Caco-2 (cell line): ENCODE measurements at regions of chr2 and their contacts with region 1.

Region 1: DNA sequence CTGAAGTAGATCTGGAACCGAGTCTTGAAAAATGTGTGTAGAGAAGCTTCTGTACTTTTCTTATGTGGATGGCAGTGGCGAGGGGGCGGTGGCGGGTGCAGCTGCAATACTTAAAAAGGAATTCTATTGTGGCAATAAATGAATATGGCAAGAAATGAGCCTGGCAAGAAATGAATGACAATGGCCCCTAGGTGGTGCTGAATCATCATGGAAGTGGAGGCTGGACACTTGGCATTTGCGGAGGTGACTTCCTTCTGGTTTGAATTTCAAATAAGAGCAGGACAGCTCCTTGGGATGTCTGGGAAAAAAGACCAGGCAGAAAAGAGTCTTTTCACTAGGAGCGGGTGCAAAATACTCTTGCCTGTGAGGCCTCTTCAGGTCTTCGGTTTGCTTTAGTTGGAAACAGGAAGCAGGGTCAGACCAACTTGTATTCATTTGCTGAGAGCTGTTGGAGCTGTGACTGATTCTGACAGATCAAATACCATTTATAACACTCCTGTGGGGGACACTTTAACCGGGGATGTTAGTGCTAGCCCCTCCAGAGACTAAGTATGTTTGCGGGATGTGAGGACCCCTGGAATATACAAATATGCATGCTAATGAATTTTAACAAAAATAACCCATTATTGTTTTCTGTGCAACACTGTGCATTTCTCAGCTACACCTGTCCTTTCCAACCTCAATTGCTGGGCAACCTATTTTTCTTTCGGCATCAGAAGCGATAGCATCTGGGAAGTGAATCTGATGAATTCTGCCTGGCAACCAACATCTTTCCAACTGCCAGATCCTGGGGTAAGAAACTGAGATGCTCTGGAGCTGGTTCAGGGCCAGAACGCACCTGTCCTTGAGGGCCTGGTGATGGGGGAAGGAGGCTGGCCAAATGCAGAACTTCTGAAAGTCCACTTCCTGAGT is 35.4 kb downstream of the FASTKD2 start:
- DNase-seq: peak; percentile 50 to 71
- H3K4me3 ChIP-seq: no peak overlapping the region
- H3K4me3 Mint-ChIP-seq: no peak overlapping the region
- H3K27ac Mint-ChIP-seq: no peak overlapping the region
- H3K4me1 ChIP-seq: no peaks in the 10 kb centered on the region
- H3K4me1 Mint-ChIP-seq: no peaks in the 10 kb centered on the region
- H3K27me3 ChIP-seq: no peaks in the 10 kb centered on the region
- H3K27me3 Mint-ChIP-seq: no peaks in the 10 kb centered on the region
- CTCF ChIP-seq: peak; percentile 64 to 69

Region 2: DNA sequence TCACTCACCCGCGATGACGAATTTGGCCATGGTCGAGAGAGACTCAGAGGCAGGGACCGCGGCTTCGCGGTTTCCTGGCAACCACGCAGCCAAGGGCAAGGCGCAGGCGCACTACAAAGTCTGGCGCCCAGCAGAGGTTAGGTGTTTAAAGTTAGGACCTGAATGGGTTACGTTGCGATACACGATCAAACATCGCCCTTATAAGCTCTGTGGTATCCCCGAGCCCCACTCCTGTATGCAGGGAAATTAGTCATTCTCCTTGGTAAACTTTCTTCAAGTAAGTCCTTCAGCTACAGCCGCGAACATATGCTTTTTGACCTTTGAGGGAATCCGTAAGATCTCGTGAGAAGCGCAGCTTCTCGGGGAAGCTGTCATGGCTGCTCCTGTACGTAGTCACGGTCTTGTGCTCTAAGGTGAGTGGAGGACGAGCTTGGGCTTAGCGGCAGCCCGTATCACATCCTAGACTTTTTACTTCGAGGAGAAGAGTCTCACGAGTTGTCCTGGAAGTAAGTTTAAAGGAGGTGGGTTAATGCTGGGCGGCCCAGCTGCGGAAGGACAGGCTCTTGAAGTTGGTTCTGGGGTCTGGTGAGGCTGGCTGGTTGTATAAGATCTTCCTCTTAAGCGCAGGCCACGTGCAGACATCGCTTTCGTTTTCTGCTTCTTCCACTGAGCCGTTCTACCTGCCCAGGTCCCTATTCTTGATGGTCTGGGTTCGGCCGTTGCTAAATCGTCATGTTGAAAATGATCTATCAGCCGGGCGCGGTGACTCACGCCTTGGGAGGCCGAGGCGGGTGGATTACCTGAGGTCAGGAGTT is 35.3 kb before region 1 on chr2 and contains the starts of genes FASTKD2 and MDH1B:
- CTCF ChIA-PET with region 1: no interaction called
- POLR2A ChIA-PET with region 1: no interaction called
- intact Hi-C with region 1: no loop called
- DNase-seq: peak; percentile 86 to 88
- H3K4me3 ChIP-seq: peak within 1 kb of the TSS; percentile 66
- H3K4me3 Mint-ChIP-seq: peak within 1 kb of the TSS; percentile 82
- H3K27ac Mint-ChIP-seq: peak within 1 kb of the TSS; percentile 93
- H3K4me1 ChIP-seq: no peaks in the 10 kb centered on the region
- H3K4me1 Mint-ChIP-seq: peaks cover 8% of the 10 kb centered on the region
- H3K27me3 ChIP-seq: no peaks in the 10 kb centered on the region
- H3K27me3 Mint-ChIP-seq: peaks cover 3% of the 10 kb centered on the region
- CTCF ChIP-seq: no peak
- total RNA-seq, gene FASTKD2: 29.8 and 30.3 TPM in 2 replicates
- total RNA-seq, gene MDH1B: 0.34 and 0.39 TPM in 2 replicates

Region 3: DNA sequence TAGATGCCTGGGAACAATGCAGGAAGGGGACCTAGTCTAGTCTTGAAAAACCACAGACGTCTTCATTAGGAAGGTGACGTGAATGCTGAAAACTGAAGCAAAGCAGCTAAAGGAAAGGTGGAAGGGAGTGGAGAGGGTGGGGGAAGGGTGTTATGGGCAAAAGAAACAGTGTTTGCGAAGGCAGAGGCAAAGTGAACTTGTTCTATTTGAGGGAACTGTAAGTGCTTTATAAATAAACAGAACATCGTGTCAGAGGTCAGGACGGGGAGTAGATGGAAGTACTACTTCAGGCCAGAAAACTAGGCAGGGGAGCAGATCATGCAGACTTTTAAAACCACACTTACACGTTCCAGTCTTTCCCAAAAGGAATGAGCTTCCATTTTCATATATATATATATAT is 22.4 kb after region 1 on chr2:
- CTCF ChIA-PET with region 1: no interaction called
- POLR2A ChIA-PET with region 1: no interaction called
- intact Hi-C with region 1: no loop called
- DNase-seq: no peak
- H3K4me3 ChIP-seq: no peak overlapping the region
- H3K4me3 Mint-ChIP-seq: no peak overlapping the region
- H3K27ac Mint-ChIP-seq: no peak overlapping the region
- H3K4me1 ChIP-seq: no peaks in the 10 kb centered on the region
- H3K4me1 Mint-ChIP-seq: peaks cover 5% of the 10 kb centered on the region
- H3K27me3 ChIP-seq: no peaks in the 10 kb centered on the region; the same call in 1 of the 2 replicates
- H3K27me3 Mint-ChIP-seq: peaks cover 4% of the 10 kb centered on the region
- CTCF ChIP-seq: no peak

Region 4: DNA sequence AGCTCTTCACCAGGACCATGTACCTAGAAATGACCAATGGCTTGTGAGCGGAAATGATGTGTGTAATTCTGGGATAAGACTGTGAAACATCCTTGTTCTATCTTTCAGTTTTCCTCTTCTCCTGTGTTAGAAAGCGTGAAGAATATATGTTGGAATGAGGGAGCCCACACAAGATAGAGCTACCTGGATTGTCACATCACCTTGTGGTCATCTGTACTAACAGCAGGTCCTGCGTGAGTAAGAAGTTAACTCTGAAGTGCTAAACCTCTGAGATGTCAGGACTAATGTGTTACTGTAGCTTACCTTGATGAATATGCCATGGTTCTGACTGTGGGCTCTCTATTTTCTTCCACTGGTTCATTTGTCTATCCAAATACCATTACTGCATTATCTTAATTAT is 40.2 kb after region 1 on chr2:
- CTCF ChIA-PET with region 1: interaction called, 4 read pairs
- POLR2A ChIA-PET with region 1: no interaction called
- intact Hi-C with region 1: loop called (anchors 1 kb)
- DNase-seq: peak in 1 of 2 experiments; percentile 11
- H3K4me3 ChIP-seq: no peak overlapping the region
- H3K4me3 Mint-ChIP-seq: no peak overlapping the region
- H3K27ac Mint-ChIP-seq: no peak overlapping the region
- H3K4me1 ChIP-seq: no peaks in the 10 kb centered on the region
- H3K4me1 Mint-ChIP-seq: no peaks in the 10 kb centered on the region
- H3K27me3 ChIP-seq: no peaks in the 10 kb centered on the region
- H3K27me3 Mint-ChIP-seq: peaks cover 9% of the 10 kb centered on the region
- CTCF ChIP-seq: peak; percentile 22 to 62

Region 5: GRCh38 chr2:206989306-206989705 is 188.5 kb after region 1 on chr2:
- CTCF ChIA-PET with region 1: interaction called, 4 read pairs
- POLR2A ChIA-PET with region 1: no interaction called
- intact Hi-C with region 1: loop called (anchors 1 kb)
- DNase-seq: peak; percentile 43 to 46
- H3K4me3 ChIP-seq: no peak overlapping the region
- H3K4me3 Mint-ChIP-seq: no peak overlapping the region
- H3K27ac Mint-ChIP-seq: no peak overlapping the region
- H3K4me1 ChIP-seq: no peaks in the 10 kb centered on the region
- H3K4me1 Mint-ChIP-seq: no peaks in the 10 kb centered on the region
- H3K27me3 ChIP-seq: no peaks in the 10 kb centered on the region
- H3K27me3 Mint-ChIP-seq: peaks cover 14% of the 10 kb centered on the region
- CTCF ChIP-seq: peak; percentile 87 to 92

Region 6: DNA sequence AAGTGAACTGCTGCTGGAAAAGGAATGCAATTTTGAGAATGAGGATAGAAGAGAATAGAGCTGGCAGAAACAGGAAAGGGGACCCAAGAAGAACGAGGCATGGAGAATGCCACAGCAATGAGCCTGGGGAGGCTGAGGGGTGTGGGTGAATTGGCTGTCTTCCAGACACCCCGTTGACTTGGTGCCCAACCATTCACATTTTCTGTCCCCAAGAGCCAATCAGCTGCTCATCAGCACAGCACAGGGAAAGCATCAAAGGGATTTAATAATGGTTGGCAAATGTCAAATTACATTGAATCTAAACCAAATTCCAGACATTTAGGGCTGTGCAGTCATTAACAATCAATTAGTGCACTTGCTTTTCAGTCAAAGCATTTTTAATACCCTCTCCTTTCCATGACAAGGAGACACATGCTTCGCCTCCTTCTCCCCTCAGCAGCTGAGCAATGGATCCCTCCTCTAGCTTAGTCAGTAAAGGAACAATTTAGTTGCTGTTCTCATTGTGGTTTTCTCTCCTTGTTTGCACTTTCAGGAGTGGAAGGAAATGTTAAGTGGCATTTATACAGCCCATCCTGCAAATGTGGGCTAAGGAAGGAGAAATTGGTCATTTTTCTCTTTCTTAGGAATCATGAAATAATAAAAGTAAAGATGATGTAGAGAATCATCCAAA is 266.2 kb after region 1 on chr2:
- CTCF ChIA-PET with region 1: no interaction called
- POLR2A ChIA-PET with region 1: no interaction called
- intact Hi-C with region 1: loop called (anchors 10 kb)
- DNase-seq: no peak
- H3K4me3 ChIP-seq: no peak overlapping the region
- H3K4me3 Mint-ChIP-seq: no peak overlapping the region
- H3K27ac Mint-ChIP-seq: no peak overlapping the region
- H3K4me1 ChIP-seq: no peaks in the 10 kb centered on the region
- H3K4me1 Mint-ChIP-seq: no peaks in the 10 kb centered on the region
- H3K27me3 ChIP-seq: no peaks in the 10 kb centered on the region
- H3K27me3 Mint-ChIP-seq: peaks cover 14% of the 10 kb centered on the region
- CTCF ChIP-seq: no peak

Region 7: GRCh38 chr2:207311316-207312005 is 510.7 kb after region 1 on chr2:
- CTCF ChIA-PET with region 1: no interaction called
- POLR2A ChIA-PET with region 1: no interaction called
- intact Hi-C with region 1: loop called (anchors 10 kb)
- DNase-seq: peak in 1 of 2 experiments; percentile 11
- H3K4me3 ChIP-seq: no peak overlapping the region
- H3K4me3 Mint-ChIP-seq: no peak overlapping the region
- H3K27ac Mint-ChIP-seq: no peak overlapping the region
- H3K4me1 ChIP-seq: no peaks in the 10 kb centered on the region
- H3K4me1 Mint-ChIP-seq: no peaks in the 10 kb centered on the region
- H3K27me3 ChIP-seq: no peaks in the 10 kb centered on the region; the same call in none of the 2 replicates
- H3K27me3 Mint-ChIP-seq: peaks cover 4% of the 10 kb centered on the region
- CTCF ChIP-seq: peak in 1 of 2 experiments; percentile 31

Region 8: GRCh38 chr2:207341804-207342203 is 541.0 kb after region 1 on chr2:
- CTCF ChIA-PET with region 1: no interaction called
- POLR2A ChIA-PET with region 1: no interaction called
- intact Hi-C with region 1: loop called (anchors 1 kb)
- DNase-seq: peak in 1 of 2 experiments; percentile 26
- H3K4me3 ChIP-seq: no peak overlapping the region
- H3K4me3 Mint-ChIP-seq: no peak overlapping the region
- H3K27ac Mint-ChIP-seq: no peak overlapping the region
- H3K4me1 ChIP-seq: no peaks in the 10 kb centered on the region
- H3K4me1 Mint-ChIP-seq: no peaks in the 10 kb centered on the region
- H3K27me3 ChIP-seq: no peaks in the 10 kb centered on the region; the same call in 1 of the 2 replicates
- H3K27me3 Mint-ChIP-seq: no peaks in the 10 kb centered on the region
- CTCF ChIP-seq: no peak